ENCODE measurements at regions of chr19 and their contacts with region 1.

Region 1: DNA sequence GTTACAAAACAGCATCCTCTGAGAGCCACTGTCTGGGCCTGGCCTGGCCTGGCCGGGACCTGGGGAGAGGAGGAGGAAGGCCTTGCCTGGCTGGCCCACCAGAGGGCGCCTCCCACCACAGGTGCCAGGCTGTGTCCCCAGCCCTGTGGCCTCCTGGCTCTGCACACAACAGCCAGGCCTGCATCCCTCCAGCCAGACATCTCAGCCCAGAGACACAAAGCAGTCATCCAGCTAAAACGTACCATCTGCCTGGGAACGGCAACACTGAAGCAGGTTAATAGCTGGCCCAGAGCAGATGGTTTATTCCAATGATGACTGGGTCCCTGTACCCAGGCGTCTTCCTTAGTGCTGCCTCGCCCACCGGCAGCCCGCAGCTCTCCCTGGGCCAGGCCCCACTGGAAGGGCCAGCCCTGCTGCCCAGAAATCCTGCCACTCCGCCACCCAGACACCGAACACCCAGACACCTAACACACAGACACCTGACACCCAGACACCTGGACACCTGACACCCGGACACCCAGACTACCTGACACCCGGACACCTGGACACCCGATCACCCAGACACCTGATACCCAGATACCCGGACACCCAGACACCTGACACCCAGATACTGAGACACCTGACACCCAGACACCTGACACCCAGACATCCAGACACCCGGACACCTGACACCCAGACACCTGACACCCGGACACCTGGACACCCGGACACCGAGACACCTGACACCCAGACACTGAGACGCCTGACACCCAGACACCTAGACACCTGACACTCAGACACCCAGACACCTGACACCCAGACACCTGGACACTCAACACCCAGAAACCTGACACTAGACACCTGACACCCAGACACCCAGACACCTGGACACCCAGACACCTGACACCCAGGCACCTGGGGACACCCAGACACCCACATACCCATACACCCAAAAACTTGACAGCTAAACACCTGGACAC is 20.1 kb downstream of the C19orf12 start:
- DNase-seq: peak; percentile 83 to 94
- ATAC-seq: peak; percentile 79 to 82
- H3K4me3 ChIP-seq: no peak overlapping the region
- H3K27ac ChIP-seq: peak overlapping the region; percentile 48 to 78 (median 68)
- H3K4me1 ChIP-seq: peaks cover 13 to 26% of the 10 kb centered on the region in 2 donors
- H3K27me3 ChIP-seq: no peaks in the 10 kb centered on the region
- CTCF ChIP-seq: peak; percentile 92 to 96 (median 92)
- POLR2A ChIP-seq: no peak

Region 2: GRCh38 chr19:29708554-29709439 is 13.8 kb after region 1 on chr19:
- in situ Hi-C with region 1: no loop called
- intact Hi-C with region 1: loop called (anchors 1 kb)
- DNase-seq: peak in 1 of 2 donors; percentile 74
- ATAC-seq: peak; percentile 64 to 67
- H3K4me3 ChIP-seq: peak overlapping the region in 1 of 4 donors; percentile 25
- H3K27ac ChIP-seq: peak overlapping the region; percentile 53 to 94 (median 70)
- H3K4me1 ChIP-seq: peaks cover 25 to 45% of the 10 kb centered on the region in 2 donors
- H3K27me3 ChIP-seq: no peaks in the 10 kb centered on the region
- CTCF ChIP-seq: no peak
- POLR2A ChIP-seq: no peak

Region 3: DNA sequence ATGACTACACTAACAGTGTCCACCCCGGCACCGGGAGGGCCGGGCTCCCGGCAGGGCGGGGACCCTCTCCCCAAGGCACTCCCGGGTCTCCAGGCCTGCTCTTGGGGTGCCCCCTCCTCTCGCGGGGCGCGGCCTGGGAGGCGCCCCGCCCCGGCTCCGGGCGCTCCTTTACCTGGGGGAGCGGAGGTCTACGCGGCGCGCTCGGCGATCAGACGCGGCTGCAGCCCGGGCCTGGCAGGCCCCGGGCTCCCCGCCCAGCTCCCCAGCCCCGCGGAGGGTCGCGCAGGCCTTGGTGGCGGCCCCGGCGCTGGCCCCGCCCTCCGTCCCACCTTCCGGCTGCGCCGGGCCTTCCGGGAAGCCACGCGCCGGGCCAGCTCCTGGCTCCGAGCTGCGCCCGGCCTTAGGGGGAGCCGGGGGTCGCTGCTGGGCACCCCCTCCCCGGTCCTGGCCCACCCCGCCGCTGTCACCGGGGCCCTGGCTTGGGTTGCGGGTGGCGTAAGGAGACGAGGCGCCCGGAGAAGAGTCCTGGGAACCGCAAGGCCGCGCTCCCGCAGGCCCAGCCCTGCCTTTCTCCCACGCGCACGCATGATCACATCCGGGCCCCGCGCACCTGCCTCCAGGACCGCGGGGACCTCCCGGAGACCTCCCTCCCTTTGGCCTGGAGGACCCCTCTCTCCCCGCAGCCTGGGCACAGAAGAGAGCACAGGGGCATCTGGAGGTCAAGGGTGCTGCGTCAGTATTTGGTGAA is 20.2 kb after region 1 on chr19 and contains the start of gene C19orf12:
- in situ Hi-C with region 1: no loop called
- intact Hi-C with region 1: loop called (anchors 1 kb)
- DNase-seq: peak in 1 of 2 donors; percentile 54
- ATAC-seq: peak; percentile 82 to 86
- H3K4me3 ChIP-seq: peak within 1 kb of the TSS; percentile 80 to 99 (median 86)
- H3K27ac ChIP-seq: peak within 1 kb of the TSS; percentile 94 to 98 (median 94)
- H3K4me1 ChIP-seq: peaks cover 24 to 26% of the 10 kb centered on the region in 2 donors
- H3K27me3 ChIP-seq: no peaks in the 10 kb centered on the region
- CTCF ChIP-seq: peak in 2 of 5 experiments; percentile 24 to 28
- POLR2A ChIP-seq: peak; percentile 92 to 94
- total RNA-seq, gene C19orf12: 54.4 to 142 (median 69.8) TPM

Region 4: GRCh38 chr19:29745253-29745652 is 50.3 kb after region 1 on chr19:
- in situ Hi-C with region 1: no loop called
- intact Hi-C with region 1: no loop called
- DNase-seq: no peak
- ATAC-seq: no peak
- H3K4me3 ChIP-seq: no peak overlapping the region
- H3K27ac ChIP-seq: no peak overlapping the region
- H3K4me1 ChIP-seq: no peaks in the 10 kb centered on the region
- H3K27me3 ChIP-seq: no peaks in the 10 kb centered on the region
- CTCF ChIP-seq: no peak
- POLR2A ChIP-seq: no peak

Measured in gastrocnemius medialis (tissue), 4 donors.